Aorta (tissue), 5 donors: ENCODE measurements at regions of chr5 and their contacts with region 1.

Region 1: DNA sequence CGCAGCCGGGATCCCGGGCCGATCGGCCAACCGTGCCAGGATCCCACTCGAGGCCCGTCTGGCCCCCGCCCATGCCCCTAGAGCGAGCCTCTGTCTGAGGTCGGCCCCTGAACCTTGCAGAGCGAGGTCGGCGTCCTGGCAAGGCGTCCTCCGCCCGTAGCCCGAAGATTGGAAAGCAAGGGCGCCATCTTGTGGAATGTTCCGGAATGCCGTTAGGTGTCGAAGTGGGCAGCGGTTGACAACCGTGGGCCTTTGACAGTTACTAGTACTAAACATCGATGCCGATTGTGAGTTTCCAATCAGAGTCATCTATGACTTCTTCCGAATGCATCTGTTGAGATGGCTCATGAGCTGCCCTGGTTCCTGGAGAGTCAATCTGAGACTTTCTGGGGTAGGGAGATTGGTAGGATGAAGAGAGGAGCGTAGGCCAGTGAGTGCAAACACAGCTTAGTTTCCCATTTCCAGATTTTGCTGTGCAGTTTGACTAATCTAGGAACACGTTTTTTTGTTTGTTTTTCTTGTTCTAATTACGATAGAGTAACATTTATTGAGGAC is 923 bp upstream of the PLK2 start:
- DNase-seq: peak; percentile 94 to 97
- ATAC-seq: peak; percentile 93
- H3K4me3 ChIP-seq: peak overlapping the region; percentile 38 to 48
- H3K27ac ChIP-seq: peak overlapping the region; percentile 71 to 89
- H3K4me1 ChIP-seq: no peaks in the 10 kb centered on the region
- H3K27me3 ChIP-seq: no peaks in the 10 kb centered on the region

Region 2: GRCh38 chr5:57499262-57500050 is 961.4 kb before region 1 on chr5:
- intact Hi-C with region 1: loop called (anchors 5 kb)
- DNase-seq: no peak
- ATAC-seq: no peak
- H3K4me3 ChIP-seq: no peak overlapping the region
- H3K27ac ChIP-seq: no peak overlapping the region
- H3K4me1 ChIP-seq: peaks cover 10 to 18% of the 10 kb centered on the region in 2 donors
- H3K27me3 ChIP-seq: no peaks in the 10 kb centered on the region

Region 3: GRCh38 chr5:57779383-57780223 is 681.2 kb before region 1 on chr5:
- intact Hi-C with region 1: loop called (anchors 1 to 2 kb)
- DNase-seq: no peak
- ATAC-seq: peak; percentile 81
- H3K4me3 ChIP-seq: no peak overlapping the region
- H3K27ac ChIP-seq: no peak overlapping the region
- H3K4me1 ChIP-seq: peaks cover 2 to 7% of the 10 kb centered on the region in 2 donors
- H3K27me3 ChIP-seq: no peaks in the 10 kb centered on the region

Region 4: GRCh38 chr5:58127479-58128220 is 333.2 kb before region 1 on chr5:
- intact Hi-C with region 1: loop called in 1 of 2 experiments (anchors 5 kb)
- DNase-seq: no peak
- ATAC-seq: peak; percentile 15
- H3K4me3 ChIP-seq: no peak overlapping the region
- H3K27ac ChIP-seq: peak overlapping the region; percentile 82 to 87
- H3K4me1 ChIP-seq: peaks cover 3 to 8% of the 10 kb centered on the region in 2 donors
- H3K27me3 ChIP-seq: no peaks in the 10 kb centered on the region

Region 5: GRCh38 chr5:58172946-58173345 is 287.9 kb before region 1 on chr5:
- intact Hi-C with region 1: no loop called
- DNase-seq: no peak
- ATAC-seq: no peak
- H3K4me3 ChIP-seq: no peak overlapping the region
- H3K27ac ChIP-seq: no peak overlapping the region
- H3K4me1 ChIP-seq: no peaks in the 10 kb centered on the region
- H3K27me3 ChIP-seq: no peaks in the 10 kb centered on the region